Right ventricle myocardium inferior (tissue), 1 donor: ENCODE measurements at regions of chr3 and their contacts with region 1.

Region 1: GRCh38 chr3:39288300-39288808 is 8.5 kb upstream of the CX3CR1 start:
- DNase-seq: peak; percentile 81
- ATAC-seq: peak; percentile 86

Region 2: DNA sequence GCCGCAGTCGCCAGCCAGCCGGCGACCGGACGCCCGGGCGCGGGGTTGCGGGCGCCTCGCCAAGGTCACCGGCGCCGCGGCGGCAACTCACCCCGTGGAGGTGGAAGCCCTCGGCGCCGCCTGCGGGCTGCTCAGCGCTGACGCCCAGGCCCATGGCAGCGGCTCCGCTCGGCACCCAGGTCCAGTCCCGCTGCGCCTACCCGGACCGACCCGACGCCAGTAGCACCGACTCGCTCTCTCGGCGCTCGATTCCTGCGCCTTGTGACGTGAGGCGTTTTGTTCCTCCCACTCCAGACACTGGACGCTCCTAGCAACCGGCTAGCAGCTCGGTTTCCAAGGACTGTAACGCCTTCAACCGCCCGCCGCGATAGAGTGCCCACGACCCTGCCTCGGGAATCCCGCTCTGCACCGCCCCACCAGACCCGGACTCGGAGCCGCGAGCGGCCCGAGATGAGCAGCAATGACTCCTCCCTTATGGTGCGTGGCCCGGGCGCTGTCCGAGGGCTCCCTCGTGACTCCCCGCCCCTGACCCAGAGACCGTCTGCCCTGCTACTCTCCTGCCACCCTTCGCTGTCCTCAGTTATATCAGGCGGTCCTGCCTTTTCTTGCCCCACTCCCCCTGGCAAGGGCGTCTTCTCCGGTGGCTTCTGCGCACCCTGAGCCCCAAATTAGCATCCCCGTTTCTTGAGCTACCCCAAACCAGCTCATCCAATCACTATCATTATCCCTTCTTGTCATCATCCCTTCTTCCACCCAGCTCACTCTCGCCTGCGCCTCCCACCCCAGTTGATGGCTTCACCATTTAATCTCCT is 180.8 kb before region 1 on chr3 and contains the starts of genes GORASP1 and TTC21A:
- intact Hi-C with region 1: loop called (anchors 5 kb)
- DNase-seq: peak; percentile 95
- ATAC-seq: peak; percentile 91
- total RNA-seq, gene GORASP1: 45.6 TPM
- total RNA-seq, gene TTC21A: 1.2 TPM

Region 3: GRCh38 chr3:39126532-39127071 is 161.8 kb before region 1 on chr3:
- intact Hi-C with region 1: loop called (anchors 1 kb)
- DNase-seq: no peak
- ATAC-seq: no peak

Region 4: GRCh38 chr3:39189959-39190269 is 98.4 kb before region 1 on chr3:
- intact Hi-C with region 1: loop called (anchors 1 kb)
- DNase-seq: no peak
- ATAC-seq: peak; percentile 51

Region 5: DNA sequence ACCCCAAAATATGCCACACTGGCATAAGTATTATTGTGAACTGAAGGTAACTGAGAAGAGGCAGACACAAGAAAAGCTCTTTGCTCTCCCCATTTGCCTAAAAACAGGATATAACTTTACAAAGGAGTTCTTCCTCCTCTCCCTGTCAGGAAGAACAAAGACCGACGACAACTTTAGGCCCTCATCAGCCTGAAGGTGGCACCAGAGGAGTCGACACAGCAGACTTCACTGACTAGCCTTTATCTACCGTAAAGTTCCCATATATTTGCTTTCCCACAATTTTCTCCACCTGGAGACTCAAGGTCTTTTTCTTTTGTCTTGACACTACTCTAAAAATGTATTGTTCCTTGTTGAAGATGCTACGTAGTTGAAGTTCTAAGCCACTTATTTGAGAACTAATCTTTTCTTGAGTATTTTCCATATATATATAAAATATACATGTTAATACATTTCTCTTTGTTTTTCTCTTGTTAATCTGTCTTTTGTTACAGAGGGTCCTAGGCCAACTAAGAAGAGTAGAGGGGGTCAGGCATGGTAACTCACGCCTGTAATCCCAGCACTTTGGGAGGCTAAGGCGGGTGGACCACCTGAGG is 79.8 kb before region 1 on chr3:
- intact Hi-C with region 1: loop called (anchors 1 kb)
- DNase-seq: peak; percentile 68
- ATAC-seq: peak; percentile 81

Region 6: DNA sequence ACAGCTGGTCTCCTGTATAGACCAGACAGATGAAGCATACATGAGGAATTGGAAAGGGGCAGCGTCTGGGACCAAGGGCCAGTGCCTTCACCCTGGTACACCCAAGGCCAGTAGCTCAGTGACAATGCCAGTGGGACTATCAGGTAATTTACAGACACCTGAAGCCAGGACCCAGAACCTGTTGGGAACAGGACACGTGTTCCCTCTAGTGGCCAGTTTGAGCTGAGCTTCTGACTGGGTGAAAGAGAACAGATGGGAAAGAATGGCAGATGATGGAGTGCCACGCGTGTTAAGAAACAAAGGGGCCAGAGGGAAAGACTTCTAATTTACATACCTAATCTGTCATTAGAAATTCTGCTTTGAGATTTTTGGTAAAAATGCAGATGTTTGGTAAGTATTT is 89.7 kb after region 1 on chr3:
- intact Hi-C with region 1: loop called (anchors 10 kb)
- DNase-seq: no peak
- ATAC-seq: no peak